ENCODE measurements at regions of chr19 and their contacts with region 1.

Region 1: DNA sequence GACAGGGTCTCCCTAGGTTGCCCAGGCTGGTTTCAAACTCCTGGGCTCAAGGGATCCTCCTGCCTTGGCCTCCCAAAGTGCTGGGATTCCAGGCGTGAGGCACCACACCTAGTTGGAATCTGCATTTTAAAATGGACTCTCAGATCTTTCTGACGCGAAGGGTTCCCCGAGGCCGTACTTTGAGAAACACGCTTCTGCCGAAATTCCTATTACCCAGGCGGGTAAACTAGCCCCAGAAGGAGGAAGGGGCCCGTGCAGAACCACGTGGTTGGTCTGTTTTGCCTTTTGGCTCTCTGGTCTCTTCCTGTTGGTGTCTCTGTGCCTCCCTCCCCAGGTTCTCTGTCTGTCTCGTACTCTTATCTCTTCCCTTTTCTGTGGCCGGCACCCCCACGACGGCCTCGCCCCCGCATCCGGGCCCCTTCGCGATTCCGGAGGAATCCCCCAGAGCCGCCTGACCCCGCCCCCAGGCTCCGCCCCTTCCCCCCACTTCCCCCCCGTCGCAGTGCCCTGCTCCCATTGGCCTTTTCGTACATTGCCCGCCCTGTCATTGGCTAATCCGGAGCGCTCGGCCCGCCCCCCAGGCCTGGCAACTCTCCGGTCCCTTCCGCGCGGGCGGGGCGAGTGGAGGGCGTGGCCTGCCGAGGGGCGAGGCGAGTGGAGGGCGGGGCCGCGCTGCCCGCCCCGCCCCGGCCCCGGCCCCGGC is at the start of gene TNFAIP8L1:
- DNase-seq: peak; percentile 84
- ATAC-seq: peak; percentile 93
- H3K4me3 ChIP-seq: peak within 1 kb of the TSS; percentile 99
- H3K27ac ChIP-seq: peak within 1 kb of the TSS; percentile 75
- H3K4me1 ChIP-seq: peaks cover 14% of the 10 kb centered on the region
- H3K27me3 ChIP-seq: no peaks in the 10 kb centered on the region
- CTCF ChIP-seq: no peak
- EP300 ChIP-seq: no peak
- POLR2A ChIP-seq: peak; percentile 67; the same call in 1 of the 2 replicates
- RAD21 ChIP-seq: no peak
- polyA plus RNA-seq, gene TNFAIP8L1: 0.93 to 2.4 TPM

Region 2: DNA sequence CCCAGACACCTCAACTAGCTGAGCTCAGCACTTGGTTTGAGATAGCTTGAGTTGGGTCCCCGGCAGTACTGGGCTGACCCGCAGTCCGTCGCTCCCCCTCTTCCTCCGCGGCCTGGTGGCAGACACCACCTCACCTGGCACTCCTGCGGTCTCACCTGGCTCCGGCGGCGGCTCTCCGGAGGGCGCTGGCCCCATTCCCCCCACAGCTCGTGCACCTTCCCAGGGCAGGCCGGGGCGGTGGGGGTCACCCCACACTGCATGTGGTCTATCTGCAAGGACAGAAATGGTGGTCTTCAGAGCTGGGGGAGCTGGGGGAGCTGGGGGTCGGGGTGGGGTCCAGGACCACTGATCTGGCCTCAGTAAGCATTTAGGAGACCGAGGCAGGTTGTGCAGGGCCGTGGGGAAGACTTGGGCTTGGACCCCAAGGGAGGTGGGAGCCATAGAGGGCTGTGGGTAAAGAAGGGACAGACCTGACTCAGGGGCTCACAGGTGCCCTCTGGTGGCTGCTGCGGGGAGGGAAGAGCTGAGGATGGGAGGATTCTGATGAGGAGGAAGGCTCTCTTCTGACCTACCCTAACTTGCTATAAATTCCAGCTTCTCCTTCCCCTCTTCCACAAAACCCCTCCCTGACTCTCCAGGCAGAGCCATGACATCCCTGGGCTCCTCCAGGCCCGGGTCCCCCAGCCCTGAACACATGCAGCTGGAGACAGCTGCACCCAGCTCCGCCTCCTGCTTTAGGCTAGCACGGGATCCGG is 114.0 kb before region 1 on chr19:
- CTCF ChIA-PET with region 1: interaction called, 34 read pairs
- POLR2A ChIA-PET with region 1: no interaction called
- RAD21 ChIA-PET with region 1: interaction called, 4 read pairs
- SMC1A ChIA-PET with region 1: no interaction called
- in situ Hi-C with region 1: no loop called
- intact Hi-C with region 1: no loop called
- DNase-seq: no peak
- ATAC-seq: peak; percentile 93
- H3K4me3 ChIP-seq: no peak overlapping the region
- H3K27ac ChIP-seq: no peak overlapping the region
- H3K4me1 ChIP-seq: no peaks in the 10 kb centered on the region
- H3K27me3 ChIP-seq: no peaks in the 10 kb centered on the region
- CTCF ChIP-seq: peak; percentile 65 to 91 (median 77)
- EP300 ChIP-seq: no peak
- POLR2A ChIP-seq: no peak
- RAD21 ChIP-seq: peak; percentile 43

Region 3: DNA sequence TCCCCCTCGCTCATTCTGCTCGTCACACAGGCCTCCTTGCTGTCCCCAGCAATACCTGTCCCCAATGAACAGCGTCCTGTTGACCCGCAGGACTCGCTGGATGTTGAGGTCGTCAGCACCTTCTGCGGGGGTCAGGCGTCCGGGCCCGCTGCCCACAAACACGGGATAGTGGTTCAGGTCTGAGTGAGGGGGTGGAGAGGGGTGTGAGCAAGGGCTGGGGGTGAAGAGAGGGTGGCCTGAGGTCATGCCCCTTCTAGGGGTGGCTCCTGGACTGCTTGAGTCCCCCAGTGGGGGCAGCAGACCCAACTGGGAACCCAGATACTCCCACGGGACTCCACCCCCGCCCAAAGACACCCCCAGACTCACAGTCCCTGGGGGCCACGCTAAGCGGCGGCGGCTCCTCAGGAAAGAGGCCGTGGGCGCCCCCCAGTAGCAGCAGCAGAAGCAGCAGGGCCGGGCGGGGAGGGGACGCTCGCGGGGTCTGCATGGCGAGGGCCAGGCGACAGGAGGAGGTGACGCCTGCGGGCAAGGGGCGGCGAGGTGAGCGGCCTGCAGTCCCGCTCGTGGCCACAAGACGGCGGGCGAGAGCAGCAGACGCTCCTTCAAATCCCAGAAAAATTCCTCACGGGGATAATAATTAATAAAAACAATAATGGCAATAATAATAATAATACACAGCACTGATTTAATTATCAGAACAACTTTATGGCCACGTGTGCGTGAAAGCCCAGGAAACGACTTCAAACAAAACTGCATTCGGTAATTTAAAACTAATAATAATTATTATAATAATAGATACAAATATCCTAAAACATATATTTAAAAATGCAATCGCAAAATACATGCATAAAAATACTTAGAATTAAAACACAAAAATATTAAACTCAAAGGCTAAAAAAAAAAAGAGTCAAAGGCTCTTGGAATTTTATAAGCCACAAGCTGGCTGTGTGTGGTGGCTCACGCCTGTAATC is 80.7 kb before region 1 on chr19:
- CTCF ChIA-PET with region 1: interaction called, 15 read pairs
- POLR2A ChIA-PET with region 1: no interaction called
- RAD21 ChIA-PET with region 1: no interaction called
- SMC1A ChIA-PET with region 1: interaction called, 3 read pairs
- in situ Hi-C with region 1: no loop called
- intact Hi-C with region 1: no loop called
- DNase-seq: no peak
- ATAC-seq: peak; percentile 48; the same call in 2 of the 3 replicates
- H3K4me3 ChIP-seq: no peak overlapping the region
- H3K27ac ChIP-seq: no peak overlapping the region
- H3K4me1 ChIP-seq: no peaks in the 10 kb centered on the region
- H3K27me3 ChIP-seq: no peaks in the 10 kb centered on the region
- CTCF ChIP-seq: peak; percentile 77 to 100 (median 91)
- EP300 ChIP-seq: no peak
- POLR2A ChIP-seq: no peak
- RAD21 ChIP-seq: peak; percentile 40; the same call in 1 of the 2 replicates

Region 4: GRCh38 chr19:4567584-4568071 is 71.4 kb before region 1 on chr19:
- CTCF ChIA-PET with region 1: interaction called, 94 read pairs
- POLR2A ChIA-PET with region 1: interaction called, 4 read pairs
- RAD21 ChIA-PET with region 1: interaction called, 16 read pairs
- SMC1A ChIA-PET with region 1: interaction called, 5 read pairs
- in situ Hi-C with region 1: no loop called
- intact Hi-C with region 1: no loop called
- DNase-seq: no peak
- ATAC-seq: peak; percentile 84
- H3K4me3 ChIP-seq: no peak overlapping the region
- H3K27ac ChIP-seq: no peak overlapping the region
- H3K4me1 ChIP-seq: no peaks in the 10 kb centered on the region
- H3K27me3 ChIP-seq: no peaks in the 10 kb centered on the region
- CTCF ChIP-seq: peak; percentile 57 to 90 (median 70)
- EP300 ChIP-seq: no peak
- POLR2A ChIP-seq: no peak
- RAD21 ChIP-seq: 0 out of 2 replicates have a peak, but pooled peaks have one; percentile 16

Region 5: GRCh38 chr19:4576016-4576933 is 62.7 kb before region 1 on chr19:
- CTCF ChIA-PET with region 1: interaction called, 94 read pairs
- POLR2A ChIA-PET with region 1: interaction called, 3 read pairs
- RAD21 ChIA-PET with region 1: interaction called, 13 read pairs
- SMC1A ChIA-PET with region 1: interaction called, 13 read pairs
- in situ Hi-C with region 1: loop called (anchors 5 kb)
- intact Hi-C with region 1: loop called (anchors 2 kb)
- DNase-seq: no peak
- ATAC-seq: peak; percentile 83
- H3K4me3 ChIP-seq: no peak overlapping the region
- H3K27ac ChIP-seq: no peak overlapping the region
- H3K4me1 ChIP-seq: no peaks in the 10 kb centered on the region
- H3K27me3 ChIP-seq: peaks cover 2 to 4% of the 10 kb centered on the region in 2 experiments
- CTCF ChIP-seq: peak; percentile 66 to 80 (median 74)
- EP300 ChIP-seq: no peak
- POLR2A ChIP-seq: no peak
- RAD21 ChIP-seq: peak; percentile 57

Region 6: DNA sequence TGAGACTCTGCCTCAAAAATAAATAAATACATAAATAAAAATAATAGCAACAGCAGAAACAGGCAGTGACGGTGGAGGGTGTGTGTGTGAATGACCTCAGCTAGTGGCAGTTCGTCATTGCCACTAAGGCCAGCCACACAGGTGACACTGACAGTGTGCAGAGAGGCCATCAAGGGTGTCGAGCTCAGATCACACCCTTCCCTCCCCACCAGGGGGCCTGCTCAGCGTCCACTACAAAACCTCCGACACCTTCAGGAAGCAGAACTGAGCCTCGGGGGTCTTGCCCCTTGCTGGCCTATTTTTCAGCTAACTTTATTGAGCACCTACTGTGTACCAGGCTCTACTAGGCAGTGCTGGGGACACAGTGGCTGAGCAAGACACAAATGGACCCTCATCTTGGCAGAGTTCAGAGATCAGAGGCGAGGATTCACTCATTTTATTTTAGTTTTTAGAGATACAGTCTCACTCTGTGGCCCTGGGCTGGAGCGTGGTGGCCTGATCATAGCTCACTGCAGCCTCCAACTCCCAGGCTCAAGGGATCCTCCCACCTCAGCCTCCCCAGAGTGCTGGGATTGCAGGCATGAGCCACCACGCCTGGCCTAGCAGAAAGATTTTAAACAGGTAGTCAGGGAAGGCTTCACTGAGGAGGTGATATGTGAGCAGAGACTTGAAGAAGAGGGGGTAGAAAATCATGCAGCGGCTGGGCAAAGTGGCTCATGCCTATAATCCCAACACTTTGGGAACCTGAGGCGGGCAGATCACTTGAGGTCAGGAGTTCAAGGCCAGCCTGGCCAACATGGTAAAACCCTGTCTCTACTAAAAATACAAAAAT is 49.2 kb before region 1 on chr19:
- CTCF ChIA-PET with region 1: interaction called, 24 read pairs
- POLR2A ChIA-PET with region 1: no interaction called
- RAD21 ChIA-PET with region 1: interaction called, 9 read pairs
- SMC1A ChIA-PET with region 1: interaction called, 6 read pairs
- in situ Hi-C with region 1: no loop called
- intact Hi-C with region 1: loop called (anchors 1 kb)
- DNase-seq: no peak
- ATAC-seq: peak; percentile 93
- H3K4me3 ChIP-seq: no peak overlapping the region
- H3K27ac ChIP-seq: no peak overlapping the region
- H3K4me1 ChIP-seq: no peaks in the 10 kb centered on the region
- H3K27me3 ChIP-seq: peaks cover 2 to 4% of the 10 kb centered on the region in 2 experiments; a peak in 3 of 4 replicates
- CTCF ChIP-seq: peak; percentile 38 to 73 (median 60)
- EP300 ChIP-seq: no peak
- POLR2A ChIP-seq: no peak
- RAD21 ChIP-seq: 0 out of 2 replicates have a peak, but pooled peaks have one; percentile 26

Region 7: GRCh38 chr19:4624733-4625362 is 14.1 kb before region 1 on chr19:
- CTCF ChIA-PET with region 1: interaction called, 12 read pairs
- POLR2A ChIA-PET with region 1: interaction called, 4 read pairs
- RAD21 ChIA-PET with region 1: no interaction called
- SMC1A ChIA-PET with region 1: no interaction called
- in situ Hi-C with region 1: no loop called
- intact Hi-C with region 1: no loop called
- DNase-seq: no peak
- ATAC-seq: peak; percentile 64
- H3K4me3 ChIP-seq: no peak overlapping the region
- H3K27ac ChIP-seq: no peak overlapping the region
- H3K4me1 ChIP-seq: no peaks in the 10 kb centered on the region
- H3K27me3 ChIP-seq: no peaks in the 10 kb centered on the region
- CTCF ChIP-seq: peak; percentile 22 to 37 (median 26); a peak in 3 of 6 replicates
- EP300 ChIP-seq: no peak
- POLR2A ChIP-seq: no peak
- RAD21 ChIP-seq: no peak

Measured in GM12878 (cell line).